ENCODE measurements at regions of chr18 and their contacts with region 1.

Region 1: DNA sequence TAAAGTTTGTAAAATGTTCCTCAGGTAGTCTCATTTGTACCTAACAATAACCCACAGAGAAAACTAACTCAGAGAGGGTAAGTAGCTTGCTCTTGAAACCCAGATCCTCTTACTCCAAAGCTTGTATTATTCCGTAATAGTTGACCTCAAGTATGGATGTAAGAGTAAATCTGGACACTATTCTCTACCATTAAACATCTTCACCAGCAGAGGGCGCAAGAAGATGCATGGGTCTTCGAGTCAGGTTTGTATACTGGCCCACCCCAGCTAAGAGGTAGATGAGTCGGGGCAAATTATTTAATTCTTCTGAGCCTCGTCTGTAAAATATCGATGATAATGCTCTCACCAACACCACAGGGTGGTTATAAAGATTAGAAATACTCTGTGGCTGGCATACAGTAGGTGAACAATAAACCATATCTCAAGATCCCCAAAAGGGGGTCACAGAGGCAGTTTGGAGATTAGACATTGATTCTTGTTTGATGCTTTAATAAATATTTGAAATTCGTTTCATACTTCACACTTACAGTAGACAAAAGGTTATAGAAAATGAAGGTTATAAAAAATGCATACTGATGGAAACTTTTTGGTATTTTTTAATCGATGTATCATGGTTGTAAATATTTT is 3.5 kb upstream of the CABLES1 start:
- DNase-seq: peak; percentile 79
- H3K4me3 Mint-ChIP-seq: no peak overlapping the region
- H3K27ac Mint-ChIP-seq: no peak overlapping the region
- H3K4me1 Mint-ChIP-seq: peaks cover 22% of the 10 kb centered on the region
- H3K27me3 Mint-ChIP-seq: peaks cover 20% of the 10 kb centered on the region

Region 2: DNA sequence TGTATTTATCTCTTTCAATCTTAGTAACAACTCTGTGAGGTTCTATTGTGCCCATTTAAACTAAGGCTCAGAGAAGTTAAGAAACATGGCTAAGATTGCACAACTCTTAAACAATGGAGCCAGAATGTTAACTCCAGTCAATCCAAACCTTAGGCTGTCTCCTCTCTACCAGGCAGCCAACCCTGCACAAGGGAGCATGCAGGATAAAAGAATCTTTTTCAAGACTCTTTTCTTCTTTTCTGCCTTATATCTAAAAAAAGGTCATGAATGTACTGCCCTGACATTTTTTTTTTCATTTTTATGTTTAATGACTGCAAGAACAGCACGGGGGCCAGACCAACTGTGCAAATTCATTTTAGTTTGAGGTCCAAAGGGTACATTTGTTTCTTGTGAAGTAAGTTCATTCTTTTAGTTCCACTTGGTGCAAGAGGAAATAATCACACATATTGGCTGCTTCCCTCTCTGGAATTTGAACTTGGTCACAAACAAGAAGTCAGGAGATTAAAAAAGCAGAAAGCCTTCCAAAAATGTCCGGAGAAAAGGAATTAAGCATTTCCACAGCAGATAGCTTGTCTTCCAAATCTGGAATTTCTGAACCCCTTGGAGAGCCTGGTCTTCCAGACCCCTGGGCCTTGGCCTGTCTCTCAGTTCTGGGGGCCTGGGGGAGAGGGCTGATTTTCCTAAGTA is 225.3 kb after region 1 on chr18:
- CTCF ChIA-PET with region 1: interaction called, 25 read pairs
- POLR2A ChIA-PET with region 1: no interaction called
- DNase-seq: no peak
- H3K4me3 Mint-ChIP-seq: no peak overlapping the region
- H3K27ac Mint-ChIP-seq: no peak overlapping the region
- H3K4me1 Mint-ChIP-seq: peaks cover 27% of the 10 kb centered on the region
- H3K27me3 Mint-ChIP-seq: no peaks in the 10 kb centered on the region

Region 3: DNA sequence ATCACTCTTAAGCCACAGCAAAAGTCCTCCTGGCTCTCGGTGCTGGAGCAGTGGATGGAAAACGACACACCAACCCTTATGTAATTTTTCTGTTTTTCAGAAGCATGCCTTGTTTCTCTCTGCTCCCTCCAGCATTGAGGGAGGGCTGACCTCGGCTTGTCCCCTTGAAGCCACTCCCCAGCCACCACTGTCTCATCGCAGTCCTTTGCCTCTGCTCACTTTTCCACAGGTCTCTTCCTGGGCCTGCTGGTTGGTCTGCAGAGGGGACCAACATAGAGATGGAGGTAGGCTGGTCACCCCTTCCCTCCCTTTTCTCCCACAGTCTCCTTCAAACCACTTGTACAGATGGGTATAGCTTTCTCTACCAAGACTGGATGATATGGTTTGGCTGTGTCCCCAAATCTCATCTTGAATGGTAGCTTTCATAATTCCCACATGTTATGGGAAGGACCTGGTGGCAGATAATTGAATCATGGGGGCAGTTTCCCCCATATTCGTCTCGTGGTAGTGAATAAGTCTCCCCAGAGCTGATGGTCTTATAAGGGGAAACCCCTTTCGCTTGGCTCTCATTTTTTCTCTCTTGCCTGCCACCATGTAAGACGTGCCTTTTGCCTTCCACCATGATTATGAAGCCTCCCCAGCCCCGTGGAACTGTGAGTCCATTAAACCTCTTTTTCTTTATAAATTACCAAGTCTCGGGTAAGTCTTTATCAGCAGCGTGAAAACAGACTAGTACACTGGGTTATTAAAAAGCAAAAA is 307.0 kb after region 1 on chr18:
- CTCF ChIA-PET with region 1: no interaction called
- POLR2A ChIA-PET with region 1: no interaction called
- DNase-seq: no peak
- H3K4me3 Mint-ChIP-seq: peak overlapping the region; percentile 88
- H3K27ac Mint-ChIP-seq: no peak overlapping the region
- H3K4me1 Mint-ChIP-seq: peaks cover 22% of the 10 kb centered on the region
- H3K27me3 Mint-ChIP-seq: peaks cover 4% of the 10 kb centered on the region

Measured in activated CD4-positive, alpha-beta T cell treated with anti-CD3 and anti-CD28 coated beads, Interleukin-2, amount 10 ng/mL, durations not matched to agents 7 days and 5 days (primary cell).